Aorta (tissue), 5 donors: ENCODE measurements at regions of chr2 and their contacts with region 1.

Region 1: DNA sequence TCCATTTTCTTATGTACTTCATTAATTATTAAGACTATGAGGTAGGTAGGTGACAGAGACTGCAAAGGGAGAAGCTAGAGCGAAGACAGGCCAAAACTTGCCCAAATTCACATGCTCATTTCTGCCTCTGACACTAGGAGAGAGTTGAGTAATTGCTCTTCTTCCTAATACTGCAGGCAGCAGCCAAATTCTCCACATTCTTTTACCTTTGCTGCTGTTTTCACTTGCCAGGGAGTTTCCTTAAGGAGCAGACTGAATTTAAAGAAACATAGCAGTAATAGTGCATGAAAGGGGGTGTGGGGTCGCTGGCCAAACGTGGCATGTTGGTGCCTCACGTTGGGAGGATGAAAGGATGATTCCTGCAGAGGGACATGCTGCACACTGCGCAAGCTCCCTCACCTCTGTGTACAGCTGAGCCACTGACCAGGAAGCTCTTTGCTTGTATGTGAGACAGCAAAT is 12.3 kb downstream of the CRIM1 start:
- DNase-seq: no peak
- ATAC-seq: no peak
- H3K4me3 ChIP-seq: no peak overlapping the region
- H3K27ac ChIP-seq: peak overlapping the region in 1 of 2 donors; percentile 20
- H3K4me1 ChIP-seq: peaks cover 15 to 34% of the 10 kb centered on the region in 2 donors
- H3K27me3 ChIP-seq: no peaks in the 10 kb centered on the region

Region 2: GRCh38 chr2:36403675-36404230 is 35.8 kb after region 1 on chr2:
- intact Hi-C with region 1: loop called in 1 of 2 experiments (anchors 5 kb)
- DNase-seq: no peak
- ATAC-seq: no peak
- H3K4me3 ChIP-seq: no peak overlapping the region
- H3K27ac ChIP-seq: no peak overlapping the region
- H3K4me1 ChIP-seq: peaks cover 10 to 24% of the 10 kb centered on the region in 2 donors
- H3K27me3 ChIP-seq: no peaks in the 10 kb centered on the region